HepG2 (cell line): ENCODE measurements at regions of chr12 and their contacts with region 1.

Region 1: DNA sequence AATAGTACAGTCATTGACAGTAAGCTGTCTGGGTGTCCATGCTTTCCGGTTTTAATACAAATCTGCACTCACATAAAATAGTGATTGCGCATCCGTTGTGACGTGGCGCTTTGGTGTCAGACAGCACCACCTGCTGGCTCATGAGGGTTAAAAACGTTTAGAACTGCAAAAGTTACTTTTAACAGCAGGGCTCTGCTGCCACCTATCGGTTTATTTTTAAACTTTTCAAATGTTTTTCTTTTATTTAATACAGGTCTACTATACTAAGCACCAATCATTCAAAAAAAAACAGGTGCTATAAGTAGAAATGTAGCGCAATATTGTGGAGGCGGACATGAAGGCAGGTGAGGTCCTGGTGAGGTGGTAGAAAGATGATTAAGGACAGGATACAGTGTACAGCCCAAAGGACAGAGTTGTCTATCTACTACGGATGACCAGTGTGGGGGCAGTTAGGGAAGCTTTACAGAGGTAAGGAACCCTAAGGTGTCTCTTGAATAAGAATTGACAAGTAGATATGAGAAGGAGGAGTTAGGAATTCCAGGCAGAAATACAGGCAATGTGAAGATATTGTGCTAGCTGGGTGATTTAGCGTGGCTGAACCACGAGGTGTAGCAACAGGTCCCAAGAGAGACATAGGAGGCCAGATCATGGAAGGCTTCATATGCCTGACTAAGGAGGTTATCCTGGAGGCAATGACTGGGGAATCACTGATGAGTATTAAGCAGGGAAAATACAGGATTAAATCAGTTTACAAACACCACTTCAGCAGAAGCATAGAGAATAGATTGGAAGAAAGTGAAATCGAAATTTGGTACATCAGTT is 91.5 kb upstream of the PRB2 start:
- DNase-seq: peak; percentile 79
- ATAC-seq: peak; percentile 77
- H3K4me3 ChIP-seq: no peak overlapping the region
- H3K27ac ChIP-seq: no peak overlapping the region
- H3K4me1 ChIP-seq: peaks cover 6% of the 10 kb centered on the region; the same call in 1 of the 2 replicates
- H3K27me3 ChIP-seq: peaks cover 0 to 6% of the 10 kb centered on the region in 2 experiments; a peak in 2 of 5 replicates
- CTCF ChIP-seq: peak; percentile 91
- EP300 ChIP-seq: no peak
- POLR2A ChIP-seq: no peak
- RAD21 ChIP-seq: peak; percentile 88

Region 2: DNA sequence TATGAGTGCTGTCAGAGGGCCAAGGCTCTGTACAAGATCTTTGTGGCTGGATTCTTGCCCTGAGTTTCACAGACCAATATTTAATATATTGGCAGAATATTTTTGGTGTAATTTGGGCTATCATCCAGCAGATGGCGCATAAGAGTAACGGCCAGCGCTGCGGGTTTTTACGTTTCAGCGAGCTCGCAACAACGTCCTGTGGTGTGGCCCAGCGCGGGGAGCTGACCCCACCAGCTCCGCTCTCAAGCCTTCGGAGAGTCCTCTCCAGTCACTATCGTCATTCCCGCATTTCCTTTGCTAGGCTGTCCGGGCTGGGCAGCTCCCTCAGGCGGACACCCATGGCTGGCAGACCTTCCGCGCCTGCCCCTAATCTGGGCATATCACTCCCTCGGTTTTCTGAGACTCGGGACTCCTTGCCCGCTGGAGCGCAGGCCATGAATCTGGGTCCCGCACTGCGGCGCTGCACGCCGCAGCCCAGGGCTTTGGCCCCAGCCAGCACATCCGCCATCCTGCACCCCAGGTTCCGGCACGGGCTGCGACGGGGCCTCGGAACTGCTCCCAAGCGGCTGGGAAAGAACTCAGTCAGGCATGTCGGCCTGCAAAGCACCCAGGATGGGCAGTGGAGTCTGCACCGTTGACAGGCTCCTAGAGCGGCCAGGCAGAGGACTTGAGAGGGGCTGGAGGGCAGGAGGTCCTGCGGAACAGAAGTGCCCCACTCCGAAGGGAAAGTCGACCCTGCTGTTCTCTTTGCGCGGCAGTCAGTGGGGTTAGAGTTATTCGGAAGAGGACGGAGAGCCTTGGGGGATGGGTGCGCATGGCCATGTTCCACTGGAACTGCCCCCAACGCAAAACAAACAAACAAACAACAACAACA is 1333.3 kb before region 1 on chr12:
- CTCF ChIA-PET with region 1: interaction called, 3 read pairs
- POLR2A ChIA-PET with region 1: no interaction called
- in situ Hi-C with region 1: no loop called
- intact Hi-C with region 1: loop called (anchors 10 kb)
- DNase-seq: peak; percentile 16
- ATAC-seq: peak; percentile 84
- H3K4me3 ChIP-seq: peak overlapping the region in 2 of 3 experiments; percentile 22 to 56; a peak in 4 of 6 replicates
- H3K27ac ChIP-seq: no peak overlapping the region
- H3K4me1 ChIP-seq: no peaks in the 10 kb centered on the region
- H3K27me3 ChIP-seq: 0 out of 5 replicates have a peak, but pooled peaks cover 0 to 5% of the 10 kb centered on the region in 2 experiments
- CTCF ChIP-seq: peak; percentile 73
- EP300 ChIP-seq: no peak
- POLR2A ChIP-seq: no peak
- RAD21 ChIP-seq: 0 out of 2 replicates have a peak, but pooled peaks have one; percentile 45

Region 3: GRCh38 chr12:10771132-10771733 is 715.6 kb before region 1 on chr12:
- CTCF ChIA-PET with region 1: interaction called, 47 read pairs
- POLR2A ChIA-PET with region 1: no interaction called
- in situ Hi-C with region 1: loop called (anchors 5 kb)
- intact Hi-C with region 1: loop called (anchors 1 kb)
- DNase-seq: peak; percentile 24
- ATAC-seq: no peak
- H3K4me3 ChIP-seq: no peak overlapping the region
- H3K27ac ChIP-seq: no peak overlapping the region
- H3K4me1 ChIP-seq: no peaks in the 10 kb centered on the region
- H3K27me3 ChIP-seq: peaks cover 0 to 6% of the 10 kb centered on the region in 2 experiments; a peak in 2 of 5 replicates
- CTCF ChIP-seq: peak; percentile 66
- EP300 ChIP-seq: no peak
- POLR2A ChIP-seq: no peak
- RAD21 ChIP-seq: peak; percentile 46; the same call in 1 of the 2 replicates

Region 4: GRCh38 chr12:10779103-10779502 is 707.7 kb before region 1 on chr12:
- CTCF ChIA-PET with region 1: no interaction called
- POLR2A ChIA-PET with region 1: no interaction called
- in situ Hi-C with region 1: loop called (anchors 5 kb)
- intact Hi-C with region 1: no loop called
- DNase-seq: no peak
- ATAC-seq: no peak
- H3K4me3 ChIP-seq: no peak overlapping the region
- H3K27ac ChIP-seq: no peak overlapping the region
- H3K4me1 ChIP-seq: no peaks in the 10 kb centered on the region
- H3K27me3 ChIP-seq: no peaks in the 10 kb centered on the region
- CTCF ChIP-seq: no peak
- EP300 ChIP-seq: no peak
- POLR2A ChIP-seq: no peak
- RAD21 ChIP-seq: no peak

Region 5: GRCh38 chr12:11228296-11228879 is 258.4 kb before region 1 on chr12:
- CTCF ChIA-PET with region 1: interaction called, 100 read pairs
- POLR2A ChIA-PET with region 1: no interaction called
- in situ Hi-C with region 1: loop called (anchors 5 kb)
- intact Hi-C with region 1: loop called (anchors 1 kb)
- DNase-seq: peak; percentile 56
- ATAC-seq: peak; percentile 97
- H3K4me3 ChIP-seq: no peak overlapping the region
- H3K27ac ChIP-seq: no peak overlapping the region
- H3K4me1 ChIP-seq: no peaks in the 10 kb centered on the region
- H3K27me3 ChIP-seq: no peaks in the 10 kb centered on the region
- CTCF ChIP-seq: peak; percentile 89
- EP300 ChIP-seq: no peak
- POLR2A ChIP-seq: no peak
- RAD21 ChIP-seq: peak; percentile 67